ENCODE measurements at regions of chr11 and their contacts with region 1.

Region 1: DNA sequence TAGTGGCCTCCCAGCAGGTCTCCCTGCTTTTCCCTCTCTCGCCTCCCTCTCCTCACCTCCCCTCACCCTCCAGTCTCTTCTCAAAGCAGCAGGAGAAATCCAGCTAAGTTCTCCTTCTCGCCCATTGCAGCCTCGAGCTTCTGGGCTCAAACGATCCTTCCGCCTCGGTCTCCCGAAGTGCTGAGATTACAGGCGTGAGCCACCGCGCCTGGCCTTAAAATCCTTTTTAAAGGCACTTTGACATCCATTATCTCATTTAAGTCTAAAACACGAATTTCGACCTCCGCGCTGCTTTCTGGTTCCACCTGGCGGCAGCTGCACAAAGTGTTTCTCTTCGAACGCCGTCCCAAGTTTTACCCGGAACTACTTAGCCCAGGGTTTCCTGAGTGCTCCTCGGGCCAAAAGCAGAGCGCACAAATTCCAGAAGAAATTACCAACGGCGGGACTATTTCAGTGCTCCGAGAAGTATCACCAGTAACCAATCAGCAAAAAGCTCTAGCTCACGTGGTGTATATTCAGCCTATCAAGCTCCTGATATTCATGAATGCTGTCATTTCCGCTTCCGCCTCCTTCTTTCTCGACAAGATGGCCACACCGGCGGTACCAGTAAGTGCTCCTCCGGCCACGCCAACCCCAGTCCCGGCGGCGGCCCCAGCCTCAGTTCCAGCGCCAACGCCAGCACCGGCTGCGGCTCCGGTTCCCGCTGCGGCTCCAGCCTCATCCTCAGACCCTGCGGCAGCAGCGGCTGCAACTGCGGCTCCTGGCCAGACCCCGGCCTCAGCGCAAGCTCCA is at the start of gene EIF3F:
- DNase-seq: peak; percentile 97 to 100
- ATAC-seq: peak; percentile 98 to 99
- H3K4me3 ChIP-seq: peak within 1 kb of the TSS; percentile 70
- H3K27ac ChIP-seq: peak within 1 kb of the TSS; percentile 80 to 91
- H3K4me1 ChIP-seq: peaks cover 15% of the 10 kb centered on the region
- CTCF ChIP-seq: peak; percentile 94
- EP300 ChIP-seq: no peak
- POLR2A ChIP-seq: peak; percentile 45
- RAD21 ChIP-seq: peak; percentile 78 to 87
- polyA plus RNA-seq, gene EIF3F: 119 and 191 TPM in 2 replicates

Region 2: DNA sequence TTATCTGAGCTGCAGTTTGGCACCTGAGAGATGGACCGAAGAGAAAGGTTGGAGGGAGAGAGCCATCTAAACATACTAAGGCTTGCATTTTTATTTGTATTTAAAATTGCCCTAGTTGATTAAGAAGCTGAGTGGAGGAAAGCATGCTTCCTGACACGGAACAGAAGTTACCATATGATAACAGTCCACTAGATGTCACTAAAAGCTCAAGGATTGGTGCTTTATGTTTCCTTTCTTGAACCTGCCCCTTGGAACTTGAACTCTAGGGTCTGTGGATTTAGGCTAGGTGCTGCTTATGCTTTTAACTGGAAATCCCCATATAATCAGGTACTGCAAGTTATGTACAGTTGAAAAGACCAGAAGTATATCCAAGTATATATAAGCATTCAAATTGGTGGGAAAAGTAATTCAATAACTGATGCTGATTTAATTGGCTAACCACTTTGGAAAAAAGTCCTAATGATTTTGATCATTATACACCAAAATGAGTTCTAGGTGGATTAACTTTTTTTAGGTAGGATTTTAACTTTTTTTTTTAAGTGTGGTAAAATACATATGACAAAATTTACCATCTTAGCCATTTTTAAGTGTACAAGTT is 888.6 kb before region 1 on chr11:
- CTCF ChIA-PET with region 1: interaction called, 19 read pairs
- POLR2A ChIA-PET with region 1: interaction called, 3 read pairs
- DNase-seq: peak; percentile 35 to 60
- ATAC-seq: peak; percentile 90 to 95
- H3K4me3 ChIP-seq: no peak overlapping the region
- H3K27ac ChIP-seq: no peak overlapping the region
- H3K4me1 ChIP-seq: no peaks in the 10 kb centered on the region
- CTCF ChIP-seq: peak; percentile 87
- EP300 ChIP-seq: no peak
- POLR2A ChIP-seq: no peak
- RAD21 ChIP-seq: peak; percentile 87 to 91

Region 3: DNA sequence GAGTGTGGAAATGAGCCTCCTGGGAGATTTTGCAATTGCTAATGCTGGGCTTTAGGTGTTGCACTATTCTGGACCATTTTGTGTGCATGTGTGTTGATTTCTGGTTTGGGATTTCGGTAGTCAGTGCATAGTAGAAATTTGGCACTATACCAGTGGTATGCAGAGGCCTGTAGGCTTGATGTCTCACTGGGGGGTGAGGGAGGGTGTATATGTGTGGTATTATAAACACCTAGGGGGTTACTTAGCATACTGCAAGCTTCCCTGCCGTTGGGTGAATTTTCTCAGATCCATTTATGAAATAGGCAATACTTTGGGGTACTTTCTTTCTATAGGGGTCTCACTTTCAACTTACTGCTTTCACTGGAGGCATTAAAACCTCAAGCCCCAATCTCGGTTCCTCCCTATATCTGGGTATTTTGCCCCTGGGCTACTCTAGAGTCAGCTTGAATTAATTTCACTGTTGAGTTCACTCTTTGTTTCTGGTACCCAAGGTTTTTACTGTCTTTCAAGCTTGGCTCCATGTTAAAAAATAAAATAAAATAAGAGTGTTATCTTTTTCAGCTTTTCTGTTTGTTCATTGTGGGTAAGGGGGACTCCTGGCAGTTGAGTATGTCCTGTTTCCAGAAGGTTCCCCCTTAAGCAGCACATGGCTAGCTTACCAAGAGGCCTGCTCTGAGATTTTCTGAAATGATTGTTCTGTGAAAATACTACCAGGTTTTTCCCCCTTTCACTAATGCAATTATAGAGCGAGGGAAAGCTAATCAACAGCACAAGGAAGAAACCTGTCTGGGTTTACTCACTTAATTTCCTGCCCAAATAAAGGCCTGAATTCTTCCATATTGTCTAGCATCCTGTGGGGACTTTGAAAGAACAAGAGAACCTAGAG is 427.3 kb before region 1 on chr11:
- CTCF ChIA-PET with region 1: no interaction called
- POLR2A ChIA-PET with region 1: no interaction called
- DNase-seq: no peak
- ATAC-seq: no peak
- H3K4me3 ChIP-seq: no peak overlapping the region
- H3K27ac ChIP-seq: no peak overlapping the region
- H3K4me1 ChIP-seq: no peaks in the 10 kb centered on the region
- CTCF ChIP-seq: no peak
- EP300 ChIP-seq: no peak
- POLR2A ChIP-seq: no peak
- RAD21 ChIP-seq: no peak

Region 4: GRCh38 chr11:7759010-7759409 is 228.0 kb before region 1 on chr11:
- CTCF ChIA-PET with region 1: no interaction called
- POLR2A ChIA-PET with region 1: no interaction called
- DNase-seq: no peak
- ATAC-seq: no peak
- H3K4me3 ChIP-seq: no peak overlapping the region
- H3K27ac ChIP-seq: no peak overlapping the region
- H3K4me1 ChIP-seq: no peaks in the 10 kb centered on the region
- CTCF ChIP-seq: no peak
- EP300 ChIP-seq: no peak
- POLR2A ChIP-seq: no peak
- RAD21 ChIP-seq: no peak

Region 5: GRCh38 chr11:7892840-7893254 is 94.1 kb before region 1 on chr11:
- CTCF ChIA-PET with region 1: interaction called, 114 read pairs
- POLR2A ChIA-PET with region 1: interaction called, 5 read pairs
- DNase-seq: peak; percentile 54 to 57
- ATAC-seq: peak; percentile 75 to 92; a peak in 5 of 6 replicates
- H3K4me3 ChIP-seq: no peak overlapping the region
- H3K27ac ChIP-seq: no peak overlapping the region
- H3K4me1 ChIP-seq: no peaks in the 10 kb centered on the region
- CTCF ChIP-seq: peak; percentile 76
- EP300 ChIP-seq: no peak
- POLR2A ChIP-seq: no peak
- RAD21 ChIP-seq: peak; percentile 66 to 70

Region 6: GRCh38 chr11:7904914-7905313 is 82.0 kb before region 1 on chr11:
- CTCF ChIA-PET with region 1: interaction called, 10 read pairs
- POLR2A ChIA-PET with region 1: interaction called, 4 read pairs
- DNase-seq: no peak
- ATAC-seq: no peak
- H3K4me3 ChIP-seq: no peak overlapping the region
- H3K27ac ChIP-seq: no peak overlapping the region
- H3K4me1 ChIP-seq: no peaks in the 10 kb centered on the region
- CTCF ChIP-seq: no peak
- EP300 ChIP-seq: no peak
- POLR2A ChIP-seq: no peak
- RAD21 ChIP-seq: no peak

Region 7: DNA sequence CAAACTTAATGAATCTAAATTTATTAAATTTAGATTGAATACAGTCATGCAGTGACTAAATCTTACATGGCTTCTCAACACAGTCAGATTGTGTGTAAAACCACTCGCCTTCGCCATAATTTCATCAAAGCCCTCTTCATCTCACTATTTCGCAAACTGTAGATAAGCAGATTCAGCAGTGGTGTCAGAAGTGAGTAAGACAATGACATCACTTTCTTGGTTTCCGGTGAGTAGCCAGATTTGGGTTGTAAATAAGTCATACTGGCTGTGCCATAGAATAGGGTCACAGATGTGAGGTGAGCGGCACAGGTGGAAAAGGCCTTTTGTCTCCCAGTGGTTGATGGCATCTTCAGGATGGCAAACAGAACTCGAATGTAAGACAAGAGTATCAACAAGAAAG is 59.3 kb before region 1 on chr11:
- CTCF ChIA-PET with region 1: no interaction called
- POLR2A ChIA-PET with region 1: no interaction called
- DNase-seq: no peak
- ATAC-seq: no peak
- H3K4me3 ChIP-seq: no peak overlapping the region
- H3K27ac ChIP-seq: no peak overlapping the region
- H3K4me1 ChIP-seq: no peaks in the 10 kb centered on the region
- CTCF ChIP-seq: no peak
- EP300 ChIP-seq: no peak
- POLR2A ChIP-seq: no peak
- RAD21 ChIP-seq: no peak

Region 8: DNA sequence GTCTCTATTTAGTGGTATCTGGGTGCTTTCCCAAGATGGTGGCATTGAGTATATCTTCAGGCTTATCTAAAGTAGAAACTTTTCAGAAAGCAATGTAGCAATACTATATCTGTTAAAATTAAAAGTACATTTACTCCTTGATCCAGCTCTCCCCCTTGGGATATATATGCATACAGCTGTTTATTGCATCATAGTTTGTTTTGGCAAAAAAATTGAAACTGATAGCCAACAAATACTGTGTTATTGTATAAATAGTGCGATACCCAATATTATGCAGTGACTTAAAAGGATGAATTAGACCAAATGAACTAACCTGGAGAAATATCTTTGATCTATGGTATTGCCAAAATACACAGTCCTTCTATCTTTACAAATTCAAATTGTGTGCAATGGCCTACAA is 37.0 kb before region 1 on chr11:
- CTCF ChIA-PET with region 1: interaction called, 10 read pairs
- POLR2A ChIA-PET with region 1: no interaction called
- DNase-seq: no peak
- ATAC-seq: no peak
- H3K4me3 ChIP-seq: no peak overlapping the region
- H3K27ac ChIP-seq: no peak overlapping the region
- H3K4me1 ChIP-seq: no peaks in the 10 kb centered on the region
- CTCF ChIP-seq: no peak
- EP300 ChIP-seq: no peak
- POLR2A ChIP-seq: no peak
- RAD21 ChIP-seq: no peak

Region 9: DNA sequence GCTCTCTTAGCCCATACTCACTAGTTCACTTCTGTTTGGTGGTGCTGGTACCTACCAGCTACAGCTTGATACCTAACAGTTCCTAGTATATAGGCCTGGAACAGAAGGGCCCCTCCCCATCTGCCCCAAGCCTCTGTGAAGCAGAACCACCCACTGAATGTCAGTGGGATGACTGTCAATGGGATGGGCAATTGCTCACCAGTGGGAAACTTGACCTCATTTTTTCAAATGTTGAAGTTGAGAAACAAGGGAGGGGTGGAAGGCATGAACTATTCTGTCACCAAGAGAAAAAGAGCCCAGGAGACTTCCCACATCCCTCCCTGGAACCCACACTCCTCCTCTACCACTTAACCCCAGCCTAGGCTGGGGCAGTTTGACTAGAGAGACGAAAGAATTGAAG is 21.6 kb before region 1 on chr11 and contains the start of gene NLRP10:
- CTCF ChIA-PET with region 1: interaction called, 16 read pairs
- POLR2A ChIA-PET with region 1: no interaction called
- DNase-seq: no peak
- ATAC-seq: no peak
- H3K4me3 ChIP-seq: no peak within 1 kb of the TSS
- H3K27ac ChIP-seq: no peak within 1 kb of the TSS
- H3K4me1 ChIP-seq: no peaks in the 10 kb centered on the region
- CTCF ChIP-seq: no peak
- EP300 ChIP-seq: no peak
- POLR2A ChIP-seq: no peak
- RAD21 ChIP-seq: no peak
- polyA plus RNA-seq, gene NLRP10: not detected in 2 replicates

Measured in A549 (cell line).